ENCODE measurements at regions of chr3 and their contacts with region 1.

Region 1: GRCh38 chr3:29065211-29065785 is 215.6 kb upstream of the RBMS3 start:
- DNase-seq: peak; percentile 98
- ATAC-seq: peak; percentile 100
- H3K4me3 ChIP-seq: no peak overlapping the region
- H3K27ac ChIP-seq: peak overlapping the region; percentile 61
- H3K4me1 ChIP-seq: peaks cover 14% of the 10 kb centered on the region
- H3K27me3 ChIP-seq: no peaks in the 10 kb centered on the region
- CTCF ChIP-seq: no peak

Region 2: DNA sequence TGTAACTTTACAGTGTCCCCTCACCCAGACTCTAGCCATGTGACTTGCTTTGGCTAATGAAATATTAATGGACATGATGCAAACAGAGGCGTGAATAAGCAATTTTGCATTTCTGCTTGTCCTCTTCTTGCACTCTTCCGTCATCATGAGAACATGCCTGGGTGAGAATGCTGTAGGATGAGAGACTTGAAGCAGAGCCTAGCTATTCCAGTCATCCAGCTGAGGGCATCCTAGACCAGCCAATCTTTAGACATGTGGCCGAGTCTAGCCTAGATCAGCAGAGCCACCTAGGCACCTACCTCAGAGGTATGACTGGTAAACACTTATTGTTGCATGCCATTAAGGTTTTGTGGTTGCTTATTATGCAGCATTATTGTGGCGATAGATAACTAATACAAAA is 266.2 kb before region 1 on chr3:
- CTCF ChIA-PET with region 1: interaction called, 3 read pairs
- POLR2A ChIA-PET with region 1: no interaction called
- intact Hi-C with region 1: loop called (anchors 5 kb)
- DNase-seq: peak; percentile 42
- ATAC-seq: peak; percentile 57
- H3K4me3 ChIP-seq: no peak overlapping the region
- H3K27ac ChIP-seq: no peak overlapping the region
- H3K4me1 ChIP-seq: peaks cover 9% of the 10 kb centered on the region; the same call in 1 of the 2 replicates
- H3K27me3 ChIP-seq: no peaks in the 10 kb centered on the region
- CTCF ChIP-seq: peak; percentile 47

Region 3: GRCh38 chr3:28924744-28925360 is 140.4 kb before region 1 on chr3:
- CTCF ChIA-PET with region 1: no interaction called
- POLR2A ChIA-PET with region 1: no interaction called
- intact Hi-C with region 1: loop called (anchors 10 kb)
- DNase-seq: peak; percentile 76
- ATAC-seq: peak; percentile 87
- H3K4me3 ChIP-seq: peak overlapping the region; percentile 61
- H3K27ac ChIP-seq: peak overlapping the region; percentile 67
- H3K4me1 ChIP-seq: peaks cover 14% of the 10 kb centered on the region
- H3K27me3 ChIP-seq: no peaks in the 10 kb centered on the region
- CTCF ChIP-seq: no peak

Region 4: GRCh38 chr3:29186982-29187725 is 121.9 kb after region 1 on chr3:
- CTCF ChIA-PET with region 1: no interaction called
- POLR2A ChIA-PET with region 1: no interaction called
- intact Hi-C with region 1: loop called (anchors 1 kb)
- DNase-seq: peak; percentile 99
- ATAC-seq: peak; percentile 79
- H3K4me3 ChIP-seq: no peak overlapping the region; the same call in 1 of the 2 replicates
- H3K27ac ChIP-seq: peak overlapping the region; percentile 98
- H3K4me1 ChIP-seq: peaks cover 45% of the 10 kb centered on the region
- H3K27me3 ChIP-seq: no peaks in the 10 kb centered on the region
- CTCF ChIP-seq: no peak

Region 5: DNA sequence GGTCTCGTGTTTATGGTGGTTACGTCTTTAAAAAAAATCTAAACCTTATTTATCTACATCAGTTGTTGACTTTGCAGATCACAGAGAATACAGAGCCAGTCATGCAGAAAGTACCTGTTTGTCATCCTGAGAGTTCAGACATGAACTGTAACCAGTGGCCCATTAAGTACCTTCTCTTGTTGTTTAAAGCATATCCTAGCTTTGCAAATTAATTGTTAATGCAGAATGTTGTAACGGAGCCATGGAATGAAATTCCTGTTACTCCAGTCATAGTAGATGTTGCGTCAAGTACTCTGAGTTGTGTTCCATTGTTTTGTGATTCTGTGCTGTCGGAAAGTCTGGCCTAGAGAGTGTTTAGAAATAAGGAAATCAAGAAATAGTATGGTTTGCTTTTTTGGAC is 420.8 kb after region 1 on chr3:
- CTCF ChIA-PET with region 1: no interaction called
- POLR2A ChIA-PET with region 1: no interaction called
- intact Hi-C with region 1: loop called (anchors 5 kb)
- DNase-seq: peak; percentile 88
- ATAC-seq: peak; percentile 93
- H3K4me3 ChIP-seq: peak overlapping the region; percentile 34; the same call in 1 of the 2 replicates
- H3K27ac ChIP-seq: peak overlapping the region; percentile 92
- H3K4me1 ChIP-seq: peaks cover 33% of the 10 kb centered on the region
- H3K27me3 ChIP-seq: no peaks in the 10 kb centered on the region
- CTCF ChIP-seq: no peak

Region 6: DNA sequence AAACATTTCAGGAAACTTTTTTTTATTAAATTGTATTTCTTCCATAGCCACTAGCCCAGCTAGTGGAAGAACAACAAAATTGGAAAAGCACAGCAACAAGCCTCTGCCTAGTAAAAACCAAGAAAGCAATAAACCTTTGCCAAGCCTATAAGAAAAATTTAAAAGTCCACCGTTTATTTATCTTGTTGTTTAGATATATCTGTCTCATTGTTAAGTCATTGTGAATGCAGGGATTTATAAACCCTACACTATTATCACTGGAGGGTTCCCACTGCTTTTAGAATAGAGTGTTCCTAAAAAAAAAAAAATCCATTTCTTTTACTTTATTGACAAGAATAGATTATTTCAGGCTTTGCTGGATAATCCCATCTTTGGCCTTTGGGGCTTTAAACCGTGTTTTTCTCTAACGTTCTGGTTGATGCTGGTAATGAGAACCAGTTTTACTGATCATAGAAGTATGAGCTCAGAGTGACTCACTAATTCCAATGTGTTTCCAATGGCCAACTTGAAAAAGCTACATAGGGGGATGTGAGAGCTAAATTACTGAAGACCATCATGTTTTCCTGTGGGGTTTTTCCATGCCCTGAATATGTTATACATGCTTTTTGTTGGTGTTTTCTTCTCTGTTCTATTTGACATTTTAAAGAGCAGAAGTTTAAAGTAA is 849.7 kb after region 1 on chr3:
- CTCF ChIA-PET with region 1: no interaction called
- POLR2A ChIA-PET with region 1: no interaction called
- intact Hi-C with region 1: loop called (anchors 10 kb)
- DNase-seq: peak; percentile 85
- ATAC-seq: peak; percentile 42
- H3K4me3 ChIP-seq: peak overlapping the region; percentile 13; the same call in 1 of the 2 replicates
- H3K27ac ChIP-seq: peak overlapping the region; percentile 84
- H3K4me1 ChIP-seq: peaks cover 55% of the 10 kb centered on the region
- H3K27me3 ChIP-seq: no peaks in the 10 kb centered on the region
- CTCF ChIP-seq: no peak

Measured in PC-3 (cell line).